Caco-2 (cell line): ENCODE measurements at regions of chr4 and their contacts with region 1.

Region 1: GRCh38 chr4:101774807-101775206 is 15.7 kb upstream of the BANK1 start:
- DNase-seq: peak in 1 of 2 experiments; percentile 41
- H3K4me3 ChIP-seq: no peak overlapping the region
- H3K4me3 Mint-ChIP-seq: peak overlapping the region; percentile 51
- H3K27ac Mint-ChIP-seq: peak overlapping the region; percentile 94
- H3K4me1 ChIP-seq: peaks cover 16% of the 10 kb centered on the region
- H3K4me1 Mint-ChIP-seq: peaks cover 17% of the 10 kb centered on the region
- H3K27me3 ChIP-seq: no peaks in the 10 kb centered on the region
- H3K27me3 Mint-ChIP-seq: no peaks in the 10 kb centered on the region
- CTCF ChIP-seq: no peak

Region 2: DNA sequence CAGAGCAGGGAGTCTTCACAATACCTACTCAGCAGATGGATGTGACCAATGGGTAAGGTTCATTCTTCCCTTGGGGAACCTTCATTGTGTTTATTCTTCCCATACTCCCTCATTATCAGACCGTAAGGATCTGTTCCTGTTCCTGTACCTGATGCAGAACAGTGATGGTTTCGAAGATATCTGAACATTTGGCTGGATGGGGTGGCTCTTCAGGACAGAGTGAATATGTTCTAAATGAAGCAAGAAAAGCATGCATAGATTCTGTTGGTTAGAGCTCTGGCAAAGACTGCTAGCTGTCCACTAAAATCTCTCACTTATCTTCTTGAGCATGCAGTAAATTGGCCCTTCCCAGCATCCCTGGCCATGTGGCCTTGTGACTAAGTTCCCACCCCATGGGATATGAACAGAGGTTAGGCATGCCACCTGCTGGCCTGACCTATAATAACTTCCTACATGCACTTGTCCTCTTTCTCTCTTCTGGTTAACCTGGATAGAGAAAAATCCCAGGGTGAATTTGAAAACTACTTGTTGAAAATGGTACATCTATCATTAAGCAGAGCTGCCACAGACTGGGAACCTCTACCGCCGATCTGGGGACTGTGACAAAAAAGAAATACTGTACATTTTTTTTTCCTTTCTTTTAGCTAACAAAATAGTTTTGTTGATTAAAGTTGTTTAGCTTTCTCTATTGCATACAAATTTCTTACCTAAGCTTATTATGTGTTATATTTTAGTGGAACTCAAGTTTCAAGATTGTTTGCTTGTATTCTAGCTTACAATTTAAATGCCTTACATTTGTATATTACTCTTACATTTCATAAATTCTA is 44.3 kb before region 1 on chr4:
- CTCF ChIA-PET with region 1: no interaction called
- POLR2A ChIA-PET with region 1: no interaction called
- intact Hi-C with region 1: no loop called
- DNase-seq: peak; percentile 72 to 75
- H3K4me3 ChIP-seq: no peak overlapping the region
- H3K4me3 Mint-ChIP-seq: no peak overlapping the region
- H3K27ac Mint-ChIP-seq: no peak overlapping the region
- H3K4me1 ChIP-seq: no peaks in the 10 kb centered on the region
- H3K4me1 Mint-ChIP-seq: no peaks in the 10 kb centered on the region
- H3K27me3 ChIP-seq: no peaks in the 10 kb centered on the region
- H3K27me3 Mint-ChIP-seq: no peaks in the 10 kb centered on the region
- CTCF ChIP-seq: peak; percentile 60 to 62

Region 3: DNA sequence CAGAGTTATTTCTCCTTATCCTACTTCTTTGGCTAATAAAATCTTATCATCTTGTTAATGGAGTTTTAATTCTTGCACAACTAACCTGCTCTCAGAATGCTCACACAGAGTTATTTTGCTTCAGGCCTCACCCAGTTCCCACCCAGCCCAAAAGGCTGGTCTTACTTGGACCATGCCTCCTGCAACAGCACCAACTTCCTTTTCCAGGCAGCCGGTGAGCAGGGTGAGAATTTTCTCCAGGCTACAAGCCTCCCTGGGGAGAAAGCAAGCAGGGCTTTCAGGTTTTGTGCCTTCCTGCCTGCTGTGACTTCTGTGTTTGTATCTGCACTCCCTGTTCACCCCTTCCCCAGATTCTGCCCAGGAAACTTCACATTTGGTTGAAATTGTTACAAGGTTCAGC is 13.4 kb before region 1 on chr4:
- CTCF ChIA-PET with region 1: no interaction called
- POLR2A ChIA-PET with region 1: no interaction called
- intact Hi-C with region 1: no loop called
- DNase-seq: no peak
- H3K4me3 ChIP-seq: no peak overlapping the region
- H3K4me3 Mint-ChIP-seq: no peak overlapping the region
- H3K27ac Mint-ChIP-seq: no peak overlapping the region
- H3K4me1 ChIP-seq: no peaks in the 10 kb centered on the region
- H3K4me1 Mint-ChIP-seq: no peaks in the 10 kb centered on the region
- H3K27me3 ChIP-seq: no peaks in the 10 kb centered on the region
- H3K27me3 Mint-ChIP-seq: no peaks in the 10 kb centered on the region
- CTCF ChIP-seq: no peak

Region 4: GRCh38 chr4:101953949-101954348 is 179.1 kb after region 1 on chr4:
- CTCF ChIA-PET with region 1: no interaction called
- POLR2A ChIA-PET with region 1: no interaction called
- intact Hi-C with region 1: loop called (anchors 10 kb)
- DNase-seq: peak; percentile 52 to 65
- H3K4me3 ChIP-seq: no peak overlapping the region
- H3K4me3 Mint-ChIP-seq: peak overlapping the region; percentile 50
- H3K27ac Mint-ChIP-seq: peak overlapping the region; percentile 96
- H3K4me1 ChIP-seq: peaks cover 43% of the 10 kb centered on the region
- H3K4me1 Mint-ChIP-seq: peaks cover 19% of the 10 kb centered on the region
- H3K27me3 ChIP-seq: no peaks in the 10 kb centered on the region
- H3K27me3 Mint-ChIP-seq: no peaks in the 10 kb centered on the region
- CTCF ChIP-seq: no peak